ENCODE measurements at regions of chr16 and their contacts with region 1.

Region 1: GRCh38 chr16:589658-590159 is at the start of gene RAB40C:
- DNase-seq: peak; percentile 95
- H3K4me3 ChIP-seq: peak within 1 kb of the TSS; percentile 74 to 97 (median 91)
- H3K27ac ChIP-seq: peak within 1 kb of the TSS; percentile 69
- H3K4me1 ChIP-seq: peaks cover 56% of the 10 kb centered on the region
- H3K27me3 ChIP-seq: no peaks in the 10 kb centered on the region
- CTCF ChIP-seq: no peak
- total RNA-seq, gene RAB40C: 11.3 to 19.9 TPM

Region 2: DNA sequence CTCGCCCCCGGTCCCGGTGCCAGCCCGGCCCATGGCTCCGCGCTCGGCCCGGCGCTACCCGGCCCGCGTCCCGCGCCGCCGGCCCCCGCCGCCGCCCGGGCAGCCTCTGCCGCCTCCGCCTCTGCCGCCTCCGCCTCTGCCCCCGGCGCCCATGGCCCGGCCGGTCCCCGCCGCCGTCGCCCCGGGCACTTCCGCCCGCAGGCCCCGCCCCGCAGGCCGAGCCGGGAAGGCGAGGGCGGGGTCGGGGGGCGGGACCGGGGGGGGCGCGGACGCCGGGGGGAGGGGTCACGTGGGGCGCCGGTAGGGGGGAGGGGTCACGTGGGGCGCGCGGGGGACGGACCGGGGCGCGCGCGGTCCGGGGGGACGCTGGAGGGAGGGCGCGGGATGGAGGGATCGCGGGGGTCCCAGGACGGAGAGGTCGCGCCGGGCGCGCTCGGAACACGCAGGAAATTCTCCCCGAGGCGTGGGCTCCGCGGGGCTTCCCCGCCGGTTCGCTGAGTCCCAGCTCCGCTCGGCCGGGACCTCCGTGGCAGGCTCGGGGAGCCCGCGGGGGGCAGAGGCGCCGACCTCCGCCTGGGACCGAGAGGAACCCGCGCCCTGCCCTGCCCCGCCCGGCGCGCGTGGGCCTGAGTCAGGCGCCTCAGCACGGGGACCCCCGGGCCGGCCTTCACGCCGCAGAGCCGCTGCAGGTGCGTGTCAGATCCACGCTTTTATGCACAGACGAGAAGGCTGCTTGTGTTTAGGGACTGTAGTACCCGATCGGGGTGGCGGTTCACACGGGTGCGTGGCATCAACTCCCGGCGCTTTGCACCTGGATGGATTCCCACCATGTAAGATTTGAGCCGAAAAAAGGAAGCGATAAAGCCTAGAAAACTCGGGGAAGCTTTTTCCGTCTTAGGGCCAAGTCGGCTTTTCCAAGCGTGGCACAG is 207.7 kb before region 1 on chr16 and contains the start of gene PGAP6:
- CTCF ChIA-PET with region 1: no interaction called
- dilution Hi-C with region 1: no loop called
- in situ Hi-C with region 1: no loop called
- intact Hi-C with region 1: loop called (anchors 10 kb)
- DNase-seq: no peak
- H3K4me3 ChIP-seq: peak within 1 kb of the TSS; percentile 77 to 85 (median 78)
- H3K27ac ChIP-seq: peak within 1 kb of the TSS; percentile 24
- H3K4me1 ChIP-seq: peaks cover 22% of the 10 kb centered on the region
- H3K27me3 ChIP-seq: no peaks in the 10 kb centered on the region
- CTCF ChIP-seq: no peak
- total RNA-seq, gene PGAP6: 31.3 to 44.5 TPM

Region 3: GRCh38 chr16:527006-527753 is 62.5 kb before region 1 on chr16 and contains the start of gene CAPN15:
- CTCF ChIA-PET with region 1: no interaction called
- dilution Hi-C with region 1: no loop called
- in situ Hi-C with region 1: no loop called
- intact Hi-C with region 1: loop called (anchors 5 kb)
- DNase-seq: peak; percentile 86
- H3K4me3 ChIP-seq: peak within 1 kb of the TSS; percentile 70 to 88 (median 83)
- H3K27ac ChIP-seq: peak within 1 kb of the TSS; percentile 80
- H3K4me1 ChIP-seq: peaks cover 38% of the 10 kb centered on the region
- H3K27me3 ChIP-seq: no peaks in the 10 kb centered on the region
- CTCF ChIP-seq: peak in 1 of 2 donors; percentile 32
- total RNA-seq, gene CAPN15: 32.8 to 58.5 TPM

Region 4: DNA sequence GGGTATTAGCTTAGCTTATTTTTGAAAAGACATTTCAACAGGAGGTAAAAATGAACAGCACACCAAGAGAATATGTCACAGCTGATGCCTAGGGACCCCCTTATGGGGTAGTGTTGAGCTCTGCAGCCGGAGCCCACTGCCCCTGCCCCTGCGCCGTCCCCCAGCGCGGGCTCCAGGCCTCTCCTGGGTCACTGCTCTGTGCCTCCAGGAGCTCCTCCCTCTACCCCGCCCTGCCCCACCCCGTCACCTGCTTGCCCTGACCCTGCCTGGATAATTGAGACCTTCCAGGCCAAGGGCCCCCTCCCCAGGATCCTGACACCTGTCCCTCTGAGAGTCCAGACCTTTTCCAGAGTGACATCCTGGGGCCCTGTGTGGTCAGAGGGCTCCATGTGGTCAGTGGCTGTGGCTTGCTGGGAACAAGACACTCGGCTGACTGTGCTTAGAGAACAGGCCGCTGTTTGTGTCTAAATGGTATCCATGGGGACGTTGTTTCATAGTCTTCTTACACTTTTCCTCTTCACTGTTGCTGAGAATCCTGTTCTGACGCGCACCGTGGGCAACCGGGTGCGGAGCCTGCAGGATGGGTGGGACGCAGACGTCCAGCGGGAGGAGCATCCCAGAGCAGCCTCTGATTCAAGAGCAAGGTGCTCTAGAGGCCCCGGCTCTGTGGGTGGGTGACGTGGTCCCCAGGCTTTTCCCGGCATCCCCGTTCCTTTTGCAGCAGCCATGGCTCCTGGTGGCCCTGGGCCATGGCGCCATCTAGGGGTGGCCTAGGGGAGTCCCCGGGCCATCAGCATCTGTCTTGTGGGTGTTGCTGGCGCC is 21.0 kb after region 1 on chr16:
- CTCF ChIA-PET with region 1: no interaction called
- dilution Hi-C with region 1: no loop called
- in situ Hi-C with region 1: no loop called
- intact Hi-C with region 1: loop called (anchors 2 kb)
- DNase-seq: peak; percentile 83
- H3K4me3 ChIP-seq: no peak overlapping the region
- H3K27ac ChIP-seq: peak overlapping the region; percentile 33
- H3K4me1 ChIP-seq: peaks cover 12% of the 10 kb centered on the region
- H3K27me3 ChIP-seq: no peaks in the 10 kb centered on the region
- CTCF ChIP-seq: peak; percentile 84 to 97

Region 5: DNA sequence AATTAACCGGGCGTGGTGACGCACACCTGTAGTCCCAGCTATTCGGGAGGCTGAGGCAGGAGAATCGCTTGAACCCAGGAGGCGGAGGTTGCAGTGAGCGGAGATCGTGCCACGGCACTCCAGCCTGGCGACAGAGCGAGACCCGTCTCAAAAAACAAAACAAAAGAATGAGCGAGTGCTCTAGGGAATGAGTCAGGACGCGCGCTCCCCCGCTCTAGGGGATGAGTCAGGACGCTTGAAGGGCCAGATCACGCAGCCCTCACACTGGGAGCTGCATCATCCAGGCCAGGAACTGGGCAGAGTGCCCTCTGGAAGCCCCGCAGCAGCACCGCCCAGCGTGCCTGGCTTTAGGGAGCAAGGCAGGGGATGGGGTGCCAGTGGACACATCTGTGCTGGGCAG is 37.1 kb after region 1 on chr16:
- CTCF ChIA-PET with region 1: no interaction called
- dilution Hi-C with region 1: loop called (anchors 5 kb)
- in situ Hi-C with region 1: no loop called
- intact Hi-C with region 1: loop called (anchors 1 kb)
- DNase-seq: peak; percentile 82
- H3K4me3 ChIP-seq: no peak overlapping the region
- H3K27ac ChIP-seq: no peak overlapping the region
- H3K4me1 ChIP-seq: peaks cover 42% of the 10 kb centered on the region
- H3K27me3 ChIP-seq: no peaks in the 10 kb centered on the region
- CTCF ChIP-seq: no peak

Region 6: DNA sequence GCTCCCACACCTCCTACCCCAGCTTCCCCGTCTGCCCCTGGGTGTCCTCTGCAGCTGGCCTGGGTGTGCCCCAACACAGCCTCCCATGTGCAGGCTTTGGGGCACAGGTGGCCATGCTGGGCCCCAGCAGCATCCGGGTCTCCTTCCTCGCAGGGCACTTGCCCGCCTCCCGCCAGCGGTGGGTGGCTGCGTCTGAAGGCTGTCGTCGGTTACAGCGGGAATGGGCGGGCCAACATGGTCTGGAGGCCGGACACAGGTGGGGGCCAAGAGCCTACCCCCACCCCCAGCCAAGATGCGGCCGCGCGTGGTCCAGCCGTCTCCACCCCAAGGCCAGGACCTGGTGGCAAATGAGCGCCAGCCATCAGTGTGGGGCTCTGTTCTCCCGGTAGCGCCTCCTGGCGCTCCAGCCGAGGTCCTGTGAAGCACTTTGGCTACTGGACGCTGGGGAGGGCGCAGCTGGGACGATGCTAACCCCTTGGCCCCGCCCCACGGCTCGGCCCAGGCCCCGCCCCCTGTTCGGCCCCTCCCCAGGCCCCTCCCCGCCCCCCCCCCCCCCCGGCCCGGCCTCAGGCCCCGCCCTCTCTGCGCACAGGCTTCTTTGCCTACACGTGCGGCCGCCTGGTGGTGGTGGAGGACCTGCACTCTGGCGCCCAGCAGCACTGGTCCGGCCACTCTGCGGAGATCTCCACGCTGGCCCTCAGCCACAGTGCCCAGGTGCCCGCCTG is 70.9 kb after region 1 on chr16:
- CTCF ChIA-PET with region 1: no interaction called
- dilution Hi-C with region 1: loop called (anchors 5 kb)
- in situ Hi-C with region 1: no loop called
- intact Hi-C with region 1: loop called (anchors 1 kb)
- DNase-seq: peak; percentile 51
- H3K4me3 ChIP-seq: no peak overlapping the region
- H3K27ac ChIP-seq: no peak overlapping the region
- H3K4me1 ChIP-seq: peaks cover 11% of the 10 kb centered on the region
- H3K27me3 ChIP-seq: no peaks in the 10 kb centered on the region
- CTCF ChIP-seq: peak; percentile 11 to 50

Measured in mammary epithelial cell (primary cell).